Caco-2 (cell line): ENCODE measurements at regions of chr9 and their contacts with region 1.

Region 1: DNA sequence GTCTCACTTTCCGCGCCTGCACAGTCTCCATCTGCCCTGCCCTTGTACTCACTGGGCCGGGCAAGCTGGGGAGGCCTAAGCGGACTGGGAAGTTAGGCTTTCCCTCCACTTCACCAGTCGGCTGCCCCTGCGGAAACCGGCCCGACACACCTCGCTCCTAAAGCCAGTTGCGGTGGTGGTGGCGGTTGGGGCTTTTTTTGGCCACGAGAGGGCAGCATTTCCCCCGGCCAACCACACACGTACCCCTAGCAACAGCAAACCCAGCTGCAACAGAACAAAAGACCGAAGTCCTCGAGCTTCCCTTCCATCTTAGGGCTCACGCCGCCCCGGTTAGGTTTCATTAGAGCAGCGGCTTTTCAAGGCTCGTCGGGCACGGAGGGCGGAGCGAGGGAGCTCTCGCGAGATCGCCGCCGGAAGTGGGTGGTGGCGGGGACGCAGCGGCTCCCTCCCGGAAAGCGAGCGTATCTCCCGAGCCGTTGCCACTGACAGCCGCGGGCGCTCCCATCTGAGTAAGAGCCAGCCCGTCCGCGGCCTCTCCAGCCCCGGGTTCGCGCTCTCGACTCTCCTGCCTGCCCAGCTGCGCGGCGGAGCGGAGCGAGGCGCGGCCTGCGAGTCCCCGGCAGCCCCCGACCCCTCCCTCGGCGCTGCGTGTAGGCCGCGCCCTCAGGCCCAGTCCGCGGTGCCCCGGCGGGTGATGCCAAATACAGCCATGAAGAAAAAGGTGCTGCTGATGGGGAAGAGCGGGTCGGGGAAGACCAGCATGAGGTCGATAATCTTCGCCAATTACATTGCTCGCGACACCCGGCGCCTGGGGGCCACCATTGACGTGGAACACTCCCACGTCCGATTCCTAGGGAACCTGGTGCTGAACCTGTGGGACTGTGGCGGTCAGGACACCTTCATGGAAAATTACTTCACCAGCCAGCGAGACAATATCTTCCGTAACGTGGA is at the start of gene RRAGA:
- DNase-seq: peak; percentile 96 to 97
- H3K4me3 ChIP-seq: peak within 1 kb of the TSS; percentile 77
- H3K4me3 Mint-ChIP-seq: peak within 1 kb of the TSS; percentile 85
- H3K27ac Mint-ChIP-seq: peak within 1 kb of the TSS; percentile 93
- H3K4me1 ChIP-seq: peaks cover 7% of the 10 kb centered on the region; the same call in 1 of the 2 replicates
- H3K4me1 Mint-ChIP-seq: no peaks in the 10 kb centered on the region
- H3K27me3 ChIP-seq: no peaks in the 10 kb centered on the region
- H3K27me3 Mint-ChIP-seq: no peaks in the 10 kb centered on the region
- CTCF ChIP-seq: peak; percentile 70
- total RNA-seq, gene RRAGA: 37.8 and 44.7 TPM in 2 replicates

Region 2: DNA sequence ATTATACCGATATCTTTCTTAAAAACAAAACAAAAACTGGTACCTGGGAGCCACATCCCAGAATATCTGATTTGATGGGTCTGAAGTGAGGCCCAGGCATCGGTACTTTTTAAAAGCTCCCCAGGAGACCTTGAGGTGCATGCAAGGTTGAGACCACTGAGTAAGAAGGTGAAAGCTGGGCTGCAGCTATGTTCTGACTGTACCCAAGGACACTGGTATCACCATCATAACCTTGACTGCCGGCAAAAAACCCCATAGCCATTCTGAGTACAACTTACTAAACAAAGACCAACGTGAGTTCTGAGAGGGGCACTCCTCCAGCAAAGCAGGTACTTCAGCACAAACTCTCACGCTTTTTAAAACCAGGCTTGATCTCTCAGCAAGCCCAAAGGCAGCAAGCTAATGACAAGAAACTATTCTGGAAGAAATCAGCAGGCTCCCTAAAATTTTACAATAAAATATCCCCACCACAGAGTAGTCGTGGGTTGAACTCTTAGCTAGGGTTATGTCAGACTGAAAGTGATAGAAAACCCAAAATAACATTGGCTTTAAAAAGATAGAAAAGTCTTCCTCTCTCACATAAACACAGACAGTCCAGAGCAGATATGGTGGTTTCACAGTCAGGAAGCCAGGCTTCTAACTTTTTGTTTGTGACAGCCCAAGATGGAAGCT is 280.2 kb before region 1 on chr9:
- CTCF ChIA-PET with region 1: no interaction called
- POLR2A ChIA-PET with region 1: no interaction called
- intact Hi-C with region 1: no loop called
- DNase-seq: no peak
- H3K4me3 ChIP-seq: no peak overlapping the region
- H3K4me3 Mint-ChIP-seq: no peak overlapping the region
- H3K27ac Mint-ChIP-seq: no peak overlapping the region
- H3K4me1 ChIP-seq: no peaks in the 10 kb centered on the region
- H3K4me1 Mint-ChIP-seq: no peaks in the 10 kb centered on the region
- H3K27me3 ChIP-seq: no peaks in the 10 kb centered on the region
- H3K27me3 Mint-ChIP-seq: peaks cover 14% of the 10 kb centered on the region
- CTCF ChIP-seq: no peak

Region 3: DNA sequence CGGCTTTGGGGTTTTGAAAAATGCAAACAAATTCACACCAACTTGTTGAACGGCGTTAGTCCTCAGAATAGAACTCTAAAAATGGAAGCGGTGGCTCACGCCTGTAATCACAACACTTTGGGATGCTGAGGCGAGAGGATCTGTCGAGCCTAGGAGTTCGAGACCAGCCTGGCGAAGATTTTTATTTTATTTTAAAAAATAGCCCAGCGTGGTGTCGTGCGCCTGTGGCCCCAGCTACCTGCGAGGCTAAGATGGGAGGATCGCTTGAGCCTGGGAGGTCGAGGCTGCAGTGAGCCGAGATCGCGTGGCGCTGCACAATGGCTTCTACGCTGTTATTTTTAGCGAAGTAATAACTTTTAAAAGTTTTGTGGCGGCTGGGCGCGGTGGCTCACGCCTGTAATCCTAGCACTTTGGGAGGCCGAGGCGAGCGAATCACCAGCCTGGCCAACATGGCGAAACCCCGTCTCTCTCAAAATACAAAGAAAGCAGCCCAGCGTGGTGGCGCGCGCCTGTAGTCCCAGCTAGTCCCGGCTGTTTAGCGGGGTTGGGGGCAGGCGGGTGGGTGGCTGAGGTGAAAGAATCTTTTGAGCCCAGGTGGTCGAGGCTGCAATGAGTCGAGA is 78.8 kb after region 1 on chr9:
- CTCF ChIA-PET with region 1: no interaction called
- POLR2A ChIA-PET with region 1: no interaction called
- intact Hi-C with region 1: loop called (anchors 1 kb)
- DNase-seq: peak; percentile 38
- H3K4me3 ChIP-seq: peak overlapping the region; percentile 53
- H3K4me3 Mint-ChIP-seq: peak overlapping the region; percentile 79
- H3K27ac Mint-ChIP-seq: peak overlapping the region; percentile 85
- H3K4me1 ChIP-seq: peaks cover 15% of the 10 kb centered on the region
- H3K4me1 Mint-ChIP-seq: peaks cover 8% of the 10 kb centered on the region
- H3K27me3 ChIP-seq: no peaks in the 10 kb centered on the region
- H3K27me3 Mint-ChIP-seq: no peaks in the 10 kb centered on the region
- CTCF ChIP-seq: no peak

Region 4: GRCh38 chr9:19379697-19380046 is 330.4 kb after region 1 on chr9:
- CTCF ChIA-PET with region 1: no interaction called
- POLR2A ChIA-PET with region 1: interaction called, 4 read pairs
- intact Hi-C with region 1: loop called (anchors 10 kb)
- DNase-seq: no peak
- H3K4me3 ChIP-seq: peak overlapping the region; percentile 71
- H3K4me3 Mint-ChIP-seq: peak overlapping the region; percentile 82
- H3K27ac Mint-ChIP-seq: peak overlapping the region; percentile 94
- H3K4me1 ChIP-seq: peaks cover 15% of the 10 kb centered on the region
- H3K4me1 Mint-ChIP-seq: peaks cover 23% of the 10 kb centered on the region
- H3K27me3 ChIP-seq: no peaks in the 10 kb centered on the region
- H3K27me3 Mint-ChIP-seq: no peaks in the 10 kb centered on the region
- CTCF ChIP-seq: no peak

Region 5: GRCh38 chr9:19464764-19465585 is 415.7 kb after region 1 on chr9:
- CTCF ChIA-PET with region 1: interaction called, 12 read pairs
- POLR2A ChIA-PET with region 1: interaction called, 3 read pairs
- intact Hi-C with region 1: no loop called
- DNase-seq: peak; percentile 78 to 79
- H3K4me3 ChIP-seq: peak overlapping the region; percentile 29
- H3K4me3 Mint-ChIP-seq: peak overlapping the region; percentile 71
- H3K27ac Mint-ChIP-seq: no peak overlapping the region
- H3K4me1 ChIP-seq: no peaks in the 10 kb centered on the region
- H3K4me1 Mint-ChIP-seq: no peaks in the 10 kb centered on the region
- H3K27me3 ChIP-seq: no peaks in the 10 kb centered on the region
- H3K27me3 Mint-ChIP-seq: peaks cover 2% of the 10 kb centered on the region
- CTCF ChIP-seq: peak; percentile 66 to 67